Activated naive CD8-positive, alpha-beta T cell treated with anti-CD3 and anti-CD28 coated beads, Interleukin-2, amount 10 ng/mL, durations not matched to agents 7 days and 5 days (primary cell): ENCODE measurements at regions of chr3 and their contacts with region 1.

Region 1: GRCh38 chr3:149145974-149146373 is 16.5 kb downstream of the HPS3 start:
- DNase-seq: no peak
- ATAC-seq: peak; percentile 77
- H3K4me3 Mint-ChIP-seq: no peak overlapping the region
- H3K27ac Mint-ChIP-seq: no peak overlapping the region
- H3K4me1 Mint-ChIP-seq: peaks cover 9% of the 10 kb centered on the region
- H3K27me3 Mint-ChIP-seq: no peaks in the 10 kb centered on the region

Region 2: DNA sequence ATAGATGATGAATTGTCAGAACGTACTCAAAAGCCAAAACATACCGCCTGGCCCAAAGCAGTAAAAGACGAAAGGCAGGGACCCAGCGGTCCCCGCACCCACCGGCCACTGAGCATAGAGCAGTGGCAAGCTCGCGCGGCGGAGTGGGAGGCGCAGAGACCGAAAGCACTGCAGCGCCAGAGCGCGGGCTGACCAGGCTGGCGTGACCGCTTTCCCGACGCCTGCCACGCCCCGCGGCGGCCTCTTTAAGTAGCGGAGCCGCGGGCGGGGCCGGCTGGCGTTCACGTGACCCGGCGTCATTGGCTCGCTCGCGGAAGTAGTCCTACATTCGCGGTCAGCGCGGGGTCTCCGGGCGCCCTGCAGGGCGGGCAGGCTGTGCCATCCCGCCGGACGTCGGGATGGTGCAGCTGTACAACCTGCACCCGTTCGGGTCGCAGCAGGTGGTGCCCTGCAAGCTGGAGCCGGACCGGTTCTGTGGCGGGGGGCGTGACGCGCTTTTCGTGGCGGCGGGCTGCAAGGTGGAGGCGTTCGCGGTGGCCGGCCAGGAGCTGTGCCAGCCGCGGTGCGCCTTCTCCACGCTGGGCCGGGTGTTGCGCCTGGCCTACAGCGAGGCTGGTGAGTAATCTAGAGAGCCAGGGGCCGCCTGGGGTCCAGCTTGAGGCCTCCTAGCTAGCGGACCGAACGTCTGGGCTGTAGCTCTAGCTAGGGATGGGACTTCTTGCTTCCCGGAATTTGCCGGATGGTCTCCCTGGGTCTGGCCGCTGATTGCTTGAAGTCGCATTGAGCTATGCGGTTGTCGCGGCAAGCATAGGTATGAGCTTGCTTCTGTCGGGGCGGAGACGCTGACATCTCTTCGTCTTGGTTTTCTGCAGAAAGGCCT is 16.4 kb before region 1 on chr3 and contains the start of gene HPS3:
- POLR2A ChIA-PET with region 1: interaction called, 11 read pairs
- DNase-seq: peak; percentile 90
- ATAC-seq: peak; percentile 88
- H3K4me3 Mint-ChIP-seq: peak within 1 kb of the TSS; percentile 91
- H3K27ac Mint-ChIP-seq: peak within 1 kb of the TSS; percentile 90
- H3K4me1 Mint-ChIP-seq: peaks cover 26% of the 10 kb centered on the region
- H3K27me3 Mint-ChIP-seq: peaks cover 5% of the 10 kb centered on the region
- total RNA-seq, gene HPS3: 35.8 to 37.4 TPM